Activated naive CD4-positive, alpha-beta T cell treated with anti-CD3 and anti-CD28 coated beads for 36 hours (primary cell): ENCODE measurements at regions of chr2 and their contacts with region 1.

Region 1: GRCh38 chr2:71545572-71546274 is 92.4 kb downstream of the DYSF start:
- DNase-seq: peak; percentile 64
- H3K4me3 Mint-ChIP-seq: peak overlapping the region; percentile 48
- H3K27ac Mint-ChIP-seq: no peak overlapping the region
- H3K4me1 Mint-ChIP-seq: peaks cover 11% of the 10 kb centered on the region
- H3K27me3 Mint-ChIP-seq: peaks cover 13% of the 10 kb centered on the region

Region 2: DNA sequence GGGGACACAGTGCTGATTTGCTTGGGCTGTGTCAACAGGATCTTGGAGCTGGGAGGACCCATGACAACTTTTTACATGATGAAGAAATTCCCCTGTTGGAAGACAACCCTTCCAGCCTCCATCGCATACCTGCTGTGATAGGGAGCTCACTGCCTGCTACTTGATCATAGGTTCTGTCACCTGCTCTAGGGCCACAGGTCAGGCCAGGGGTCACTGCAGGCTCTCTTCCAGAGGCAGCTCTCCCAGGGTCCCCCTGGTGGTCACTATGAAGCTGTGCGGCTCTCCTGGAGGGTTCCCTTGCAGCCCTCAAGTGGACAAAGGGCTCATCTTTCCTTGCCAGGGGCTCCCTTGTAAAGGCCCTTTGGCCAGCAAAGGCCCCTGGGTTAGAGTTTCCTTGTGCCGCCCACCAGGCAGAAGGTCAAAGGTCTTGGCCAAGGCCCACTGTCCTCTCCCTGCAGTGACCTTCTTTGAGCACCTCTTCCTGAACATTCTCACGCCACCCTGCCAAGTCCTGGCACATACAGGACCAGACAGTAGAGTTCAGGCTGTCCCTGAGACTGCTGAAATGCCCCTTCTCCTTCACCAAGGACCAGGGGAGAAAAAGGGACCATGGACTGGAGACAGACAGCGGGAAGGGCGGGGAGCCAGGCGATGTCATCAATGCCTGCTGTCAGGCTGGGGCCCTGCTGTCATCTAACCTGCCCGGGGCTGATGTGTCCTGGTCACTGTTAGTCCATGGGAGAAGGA is 252.7 kb after region 1 on chr2:
- CTCF ChIA-PET with region 1: interaction called, 10 read pairs
- intact Hi-C with region 1: loop called (anchors 2 kb)
- DNase-seq: peak; percentile 18
- H3K4me3 Mint-ChIP-seq: no peak overlapping the region
- H3K27ac Mint-ChIP-seq: no peak overlapping the region
- H3K4me1 Mint-ChIP-seq: no peaks in the 10 kb centered on the region
- H3K27me3 Mint-ChIP-seq: peaks cover 4% of the 10 kb centered on the region

Region 3: DNA sequence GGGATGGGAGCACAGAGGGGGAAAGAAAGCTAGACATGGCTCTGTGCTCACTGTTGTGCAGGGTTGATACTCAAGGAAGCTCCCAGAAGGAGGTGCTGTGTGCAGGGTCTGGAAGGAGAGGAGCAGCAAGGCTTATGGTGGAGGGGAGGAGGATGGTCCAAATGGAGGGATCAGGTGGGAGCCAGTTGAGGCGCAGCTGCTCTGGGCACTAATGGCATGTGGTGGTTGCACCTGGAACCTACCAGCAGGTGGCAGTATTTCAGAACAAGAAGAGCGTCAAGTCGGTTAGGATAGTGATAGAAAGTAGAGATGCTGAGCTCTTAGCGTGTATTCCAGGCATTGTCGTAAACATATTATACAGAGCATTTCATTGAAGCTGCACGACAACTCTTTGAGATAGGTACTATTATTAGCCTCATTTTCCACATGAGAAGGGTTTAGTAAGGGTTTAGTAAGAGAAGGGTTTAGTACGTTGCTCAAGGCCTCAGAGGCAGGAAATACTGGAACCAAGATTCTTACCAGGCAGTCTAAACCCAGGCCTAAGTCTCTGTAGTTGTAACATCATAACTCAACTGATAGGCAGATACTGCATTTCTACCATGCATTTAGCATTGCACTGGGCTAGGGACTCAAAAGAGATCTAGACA is 378.3 kb after region 1 on chr2:
- CTCF ChIA-PET with region 1: interaction called, 3 read pairs
- intact Hi-C with region 1: loop called (anchors 2 kb)
- DNase-seq: peak; percentile 75
- H3K4me3 Mint-ChIP-seq: no peak overlapping the region
- H3K27ac Mint-ChIP-seq: no peak overlapping the region
- H3K4me1 Mint-ChIP-seq: no peaks in the 10 kb centered on the region
- H3K27me3 Mint-ChIP-seq: no peaks in the 10 kb centered on the region

Region 4: GRCh38 chr2:72150157-72150865 is 604.6 kb after region 1 on chr2:
- CTCF ChIA-PET with region 1: interaction called, 17 read pairs
- intact Hi-C with region 1: loop called (anchors 1 kb)
- DNase-seq: peak; percentile 78
- H3K4me3 Mint-ChIP-seq: peak overlapping the region; percentile 77
- H3K27ac Mint-ChIP-seq: no peak overlapping the region
- H3K4me1 Mint-ChIP-seq: peaks cover 38% of the 10 kb centered on the region
- H3K27me3 Mint-ChIP-seq: peaks cover 60% of the 10 kb centered on the region

Region 5: GRCh38 chr2:72745679-72746368 is 1200.1 kb after region 1 on chr2:
- CTCF ChIA-PET with region 1: no interaction called
- intact Hi-C with region 1: loop called (anchors 2 kb)
- DNase-seq: no peak
- H3K4me3 Mint-ChIP-seq: no peak overlapping the region
- H3K27ac Mint-ChIP-seq: no peak overlapping the region
- H3K4me1 Mint-ChIP-seq: peaks cover 2% of the 10 kb centered on the region
- H3K27me3 Mint-ChIP-seq: no peaks in the 10 kb centered on the region